PC-9 (cell line): ENCODE measurements at regions of chr13 and their contacts with region 1.

Region 1: DNA sequence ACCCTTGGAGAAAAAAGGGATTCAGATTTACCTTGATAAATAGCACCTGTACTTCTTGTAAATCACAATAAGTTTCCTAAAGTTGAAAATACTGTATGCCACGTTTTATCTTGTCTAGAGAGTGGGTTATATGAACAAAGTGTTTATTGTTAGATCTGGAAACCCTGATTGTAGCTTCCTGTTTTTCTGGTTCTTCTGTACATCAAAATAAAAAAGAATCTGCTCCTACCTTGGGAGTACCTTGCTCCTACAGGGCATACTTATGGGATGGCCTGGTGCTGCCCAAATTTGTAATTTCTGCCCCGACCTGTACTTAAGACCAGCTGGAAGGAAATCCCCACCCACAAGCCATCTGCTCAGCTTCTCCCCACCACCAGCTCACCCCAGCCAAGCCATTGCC is 241.1 kb downstream of the SLC7A1 start:
- DNase-seq: no peak
- H3K4me3 ChIP-seq: no peak overlapping the region
- H3K27ac ChIP-seq: no peak overlapping the region
- H3K4me1 ChIP-seq: no peaks in the 10 kb centered on the region
- H3K27me3 ChIP-seq: peaks cover 62% of the 10 kb centered on the region
- CTCF ChIP-seq: no peak

Region 2: GRCh38 chr13:29210676-29211075 is 143.7 kb before region 1 on chr13:
- CTCF ChIA-PET with region 1: no interaction called
- POLR2A ChIA-PET with region 1: no interaction called
- intact Hi-C with region 1: loop called (anchors 5 kb)
- DNase-seq: no peak
- H3K4me3 ChIP-seq: no peak overlapping the region
- H3K27ac ChIP-seq: no peak overlapping the region
- H3K4me1 ChIP-seq: no peaks in the 10 kb centered on the region
- H3K27me3 ChIP-seq: peaks cover 20% of the 10 kb centered on the region; the same call in 1 of the 2 replicates
- CTCF ChIP-seq: no peak